Right ventricle myocardium superior (tissue), 1 donor: ENCODE measurements at regions of chr1 and their contacts with region 1.

Region 1: GRCh38 chr1:107782217-107782845 is 182.6 kb downstream of the VAV3 start:
- DNase-seq: no peak
- ATAC-seq: peak; percentile 63

Region 2: DNA sequence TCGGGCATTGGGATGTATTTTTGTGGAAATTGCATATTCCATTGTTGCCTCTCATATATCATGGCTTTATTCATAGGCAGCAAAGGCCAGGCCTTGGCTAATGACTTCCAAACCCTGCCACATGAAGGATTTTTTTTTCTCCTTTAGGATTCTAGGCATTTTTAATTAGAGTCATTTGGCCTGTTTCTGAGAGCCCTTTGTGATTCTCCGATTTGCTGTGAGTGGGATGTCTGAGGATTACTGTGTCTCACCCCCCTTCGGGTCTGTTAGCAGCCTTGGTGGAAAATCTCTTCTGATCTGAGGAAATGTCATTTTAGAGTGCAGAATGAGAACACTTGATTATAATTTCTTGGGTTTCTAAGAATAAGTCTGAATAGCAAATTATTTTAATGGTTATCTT is 388.0 kb before region 1 on chr1:
- intact Hi-C with region 1: no loop called
- DNase-seq: no peak
- ATAC-seq: no peak

Region 3: DNA sequence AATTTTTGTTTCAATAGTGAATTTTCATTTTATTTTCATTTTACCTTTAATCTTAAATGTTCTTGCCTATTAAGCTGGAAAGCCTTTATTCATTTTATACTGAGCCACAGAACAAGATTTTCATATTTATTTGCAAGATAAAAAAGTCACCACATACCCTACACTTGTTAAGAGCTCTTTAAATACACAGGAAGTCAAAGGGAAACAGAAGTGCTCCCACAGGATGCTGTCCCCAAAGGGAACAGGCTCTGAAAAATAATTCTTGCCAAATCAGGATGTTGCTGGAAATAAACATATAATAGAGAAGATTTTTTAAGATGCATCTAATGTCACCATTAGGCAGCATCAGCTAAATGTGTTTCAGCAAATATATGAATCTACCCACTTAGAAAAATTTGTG is 69.1 kb after region 1 on chr1:
- intact Hi-C with region 1: loop called (anchors 10 kb)
- DNase-seq: no peak
- ATAC-seq: no peak

Region 4: GRCh38 chr1:107883562-107883961 is 101.2 kb after region 1 on chr1:
- intact Hi-C with region 1: loop called (anchors 10 kb)
- DNase-seq: no peak
- ATAC-seq: no peak

Region 5: GRCh38 chr1:108125312-108126138 is 343.2 kb after region 1 on chr1:
- intact Hi-C with region 1: loop called (anchors 2 kb)
- DNase-seq: peak; percentile 56
- ATAC-seq: peak; percentile 95